ENCODE measurements at regions of chr22 and their contacts with region 1.

Region 1: GRCh38 chr22:31192513-31192912 is 19.6 kb upstream of the LIMK2 start:
- DNase-seq: peak; percentile 8
- H3K4me3 ChIP-seq: no peak overlapping the region
- H3K27ac ChIP-seq: no peak overlapping the region
- H3K4me1 ChIP-seq: no peaks in the 10 kb centered on the region
- H3K27me3 ChIP-seq: no peaks in the 10 kb centered on the region
- CTCF ChIP-seq: no peak

Region 2: DNA sequence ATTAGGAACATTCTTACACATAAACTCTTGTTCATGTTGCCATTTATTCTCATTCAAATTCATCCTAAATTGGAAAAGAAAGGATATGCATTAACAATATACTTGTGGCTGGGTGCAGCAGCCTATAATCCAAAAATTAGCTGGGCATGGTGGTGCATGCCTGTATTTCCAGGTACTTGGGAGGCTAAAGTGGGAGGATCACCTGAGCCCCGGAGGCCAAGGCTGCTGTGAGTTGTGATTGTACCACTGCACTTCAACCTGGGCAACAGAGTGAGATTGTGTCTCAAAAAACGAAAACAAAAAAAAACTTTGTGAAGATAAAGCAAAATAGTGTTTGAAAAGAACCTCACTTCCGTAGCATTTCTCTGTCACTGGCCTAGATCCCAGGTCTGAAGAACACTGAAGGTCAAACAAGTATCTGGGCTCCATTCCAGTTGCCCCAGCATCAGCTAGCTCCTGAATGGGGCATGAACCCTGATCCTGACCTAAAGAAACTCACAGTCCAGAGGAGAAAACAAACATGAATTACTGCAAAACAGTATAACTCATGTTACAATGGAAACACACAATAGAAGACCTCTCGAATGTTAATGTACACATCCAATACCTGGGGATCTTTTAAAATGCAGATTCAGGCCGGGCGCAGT is 191.3 kb before region 1 on chr22:
- CTCF ChIA-PET with region 1: no interaction called
- dilution Hi-C with region 1: no loop called
- in situ Hi-C with region 1: no loop called
- intact Hi-C with region 1: no loop called
- DNase-seq: no peak
- H3K4me3 ChIP-seq: no peak overlapping the region
- H3K27ac ChIP-seq: no peak overlapping the region
- H3K4me1 ChIP-seq: no peaks in the 10 kb centered on the region
- H3K27me3 ChIP-seq: no peaks in the 10 kb centered on the region
- CTCF ChIP-seq: no peak

Region 3: DNA sequence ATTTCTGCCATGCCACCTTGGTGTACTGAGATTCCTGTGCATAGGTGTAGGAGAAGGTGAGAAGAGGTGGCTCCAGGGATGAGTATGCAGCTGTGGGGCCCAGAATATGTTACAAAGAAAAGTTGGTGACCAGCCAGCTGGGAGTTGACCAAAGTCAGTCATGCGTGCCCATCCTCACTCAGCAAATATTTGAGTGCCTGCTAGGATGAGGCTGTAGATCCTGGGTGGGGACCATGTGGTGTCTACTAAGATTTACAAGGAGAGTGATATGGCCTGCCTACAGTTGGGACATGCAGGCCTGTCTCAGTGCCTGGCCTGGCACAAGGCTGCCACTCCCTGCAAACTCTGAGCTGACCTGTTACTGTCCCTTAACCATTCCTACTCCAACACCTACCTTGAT is 13.2 kb before region 1 on chr22:
- CTCF ChIA-PET with region 1: no interaction called
- dilution Hi-C with region 1: no loop called
- in situ Hi-C with region 1: no loop called
- intact Hi-C with region 1: loop called (anchors 2 kb)
- DNase-seq: peak; percentile 67
- H3K4me3 ChIP-seq: no peak overlapping the region
- H3K27ac ChIP-seq: peak overlapping the region; percentile 1
- H3K4me1 ChIP-seq: peaks cover 35% of the 10 kb centered on the region
- H3K27me3 ChIP-seq: no peaks in the 10 kb centered on the region
- CTCF ChIP-seq: no peak

Region 4: GRCh38 chr22:31268281-31268680 is 75.8 kb after region 1 on chr22:
- CTCF ChIA-PET with region 1: no interaction called
- dilution Hi-C with region 1: no loop called
- in situ Hi-C with region 1: no loop called
- intact Hi-C with region 1: no loop called
- DNase-seq: no peak
- H3K4me3 ChIP-seq: no peak overlapping the region
- H3K27ac ChIP-seq: no peak overlapping the region
- H3K4me1 ChIP-seq: no peaks in the 10 kb centered on the region
- H3K27me3 ChIP-seq: no peaks in the 10 kb centered on the region
- CTCF ChIP-seq: no peak